Heart right ventricle (tissue), 16 donors: ENCODE measurements at regions of chr3 and their contacts with region 1.

Region 1: GRCh38 chr3:128680602-128681368 is 30.2 kb upstream of the RPN1 start:
- DNase-seq: peak; percentile 100
- ATAC-seq: peak; percentile 99 to 100 (median 100)
- H3K4me3 ChIP-seq: peak overlapping the region; percentile 54 to 78 (median 66)
- H3K27ac ChIP-seq: peak overlapping the region; percentile 88 to 99 (median 95)
- H3K4me1 ChIP-seq: peaks cover 0 to 21% (median 8%) of the 10 kb centered on the region in 9 donors
- H3K27me3 ChIP-seq: no peaks in the 10 kb centered on the region
- CTCF ChIP-seq: peak; percentile 92 to 100 (median 97)

Region 2: GRCh38 chr3:128497387-128498126 is 183.2 kb before region 1 on chr3:
- intact Hi-C with region 1: no loop called
- DNase-seq: peak; percentile 76 to 78
- ATAC-seq: peak; percentile 66 to 88 (median 82)
- H3K4me3 ChIP-seq: peak overlapping the region; percentile 32 to 65 (median 55)
- H3K27ac ChIP-seq: peak overlapping the region in 2 of 10 donors; percentile 6 to 55
- H3K4me1 ChIP-seq: peaks cover 2 to 31% (median 27%) of the 10 kb centered on the region in 9 donors
- H3K27me3 ChIP-seq: peaks cover 3 to 89% (median 47%) of the 10 kb centered on the region in 7 donors
- CTCF ChIP-seq: peak; percentile 57 to 90 (median 81)

Region 3: DNA sequence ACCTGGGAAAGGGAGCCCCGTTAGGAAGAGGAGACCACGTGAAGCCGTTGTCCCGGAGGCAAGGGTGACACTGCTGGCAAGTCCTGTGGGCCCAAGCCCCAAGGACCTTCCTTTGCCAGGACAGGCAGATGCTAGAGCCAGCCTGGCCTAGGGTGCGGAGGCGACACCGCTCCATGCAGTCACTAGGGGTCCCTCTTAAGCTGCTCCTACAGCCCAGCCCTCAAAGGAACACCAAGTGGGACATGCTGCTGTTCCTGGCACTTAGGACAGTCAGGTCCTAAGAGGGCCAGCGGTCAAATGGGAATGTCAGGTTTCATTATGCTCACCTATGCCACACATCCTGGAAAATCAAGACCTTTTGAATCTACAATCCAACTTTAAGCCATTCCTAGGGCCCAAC is 89.8 kb before region 1 on chr3:
- intact Hi-C with region 1: no loop called
- DNase-seq: no peak
- ATAC-seq: peak in 1 of 8 donors; percentile 43
- H3K4me3 ChIP-seq: no peak overlapping the region
- H3K27ac ChIP-seq: peak overlapping the region in 1 of 10 donors; percentile 60
- H3K4me1 ChIP-seq: peaks cover 0 to 18% (median 0%) of the 10 kb centered on the region in 9 donors
- H3K27me3 ChIP-seq: peaks cover 0 to 10% (median 0%) of the 10 kb centered on the region in 7 donors
- CTCF ChIP-seq: peak in 1 of 9 donors; percentile 19

Region 4: DNA sequence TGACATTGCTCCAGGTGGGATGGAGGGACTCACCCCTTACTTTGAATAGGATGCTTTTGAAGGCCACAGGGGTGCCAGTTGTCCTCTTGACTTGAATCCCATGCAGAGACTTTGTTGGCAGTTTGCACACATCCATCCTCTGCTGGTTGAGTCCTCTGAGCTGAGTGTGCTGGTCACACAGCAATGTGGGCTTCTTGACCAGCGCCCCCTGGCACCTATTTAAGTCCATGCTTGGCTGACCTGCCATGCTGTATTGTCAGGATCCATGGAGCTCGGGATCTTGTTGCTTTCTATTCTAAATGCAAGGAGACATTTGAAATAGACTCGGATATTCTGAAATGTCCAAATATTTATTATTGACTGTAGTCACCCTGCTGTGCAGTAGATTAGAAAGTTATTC is 65.0 kb after region 1 on chr3:
- intact Hi-C with region 1: no loop called
- DNase-seq: no peak
- ATAC-seq: no peak
- H3K4me3 ChIP-seq: no peak overlapping the region
- H3K27ac ChIP-seq: no peak overlapping the region
- H3K4me1 ChIP-seq: peaks cover 9 to 55% (median 31%) of the 10 kb centered on the region in 9 donors
- H3K27me3 ChIP-seq: no peaks in the 10 kb centered on the region
- CTCF ChIP-seq: no peak

Region 5: GRCh38 chr3:128879125-128879969 is 198.6 kb after region 1 on chr3 and contains the start of gene ACAD9:
- intact Hi-C with region 1: loop called in 2 of 10 experiments (anchors 1 to 10 kb)
- DNase-seq: peak; percentile 96 to 98
- ATAC-seq: peak; percentile 97 to 99 (median 98)
- H3K4me3 ChIP-seq: peak within 1 kb of the TSS; percentile 54 to 92 (median 72)
- H3K27ac ChIP-seq: peak within 1 kb of the TSS; percentile 72 to 96 (median 94)
- H3K4me1 ChIP-seq: peaks cover 0 to 45% (median 29%) of the 10 kb centered on the region in 9 donors
- H3K27me3 ChIP-seq: no peaks in the 10 kb centered on the region
- CTCF ChIP-seq: no peak
- total RNA-seq, gene ACAD9: 34.8 to 45.9 (median 37.8) TPM